Kidney (tissue), 22 donors: ENCODE measurements at regions of chr4 and their contacts with region 1.

Region 1: DNA sequence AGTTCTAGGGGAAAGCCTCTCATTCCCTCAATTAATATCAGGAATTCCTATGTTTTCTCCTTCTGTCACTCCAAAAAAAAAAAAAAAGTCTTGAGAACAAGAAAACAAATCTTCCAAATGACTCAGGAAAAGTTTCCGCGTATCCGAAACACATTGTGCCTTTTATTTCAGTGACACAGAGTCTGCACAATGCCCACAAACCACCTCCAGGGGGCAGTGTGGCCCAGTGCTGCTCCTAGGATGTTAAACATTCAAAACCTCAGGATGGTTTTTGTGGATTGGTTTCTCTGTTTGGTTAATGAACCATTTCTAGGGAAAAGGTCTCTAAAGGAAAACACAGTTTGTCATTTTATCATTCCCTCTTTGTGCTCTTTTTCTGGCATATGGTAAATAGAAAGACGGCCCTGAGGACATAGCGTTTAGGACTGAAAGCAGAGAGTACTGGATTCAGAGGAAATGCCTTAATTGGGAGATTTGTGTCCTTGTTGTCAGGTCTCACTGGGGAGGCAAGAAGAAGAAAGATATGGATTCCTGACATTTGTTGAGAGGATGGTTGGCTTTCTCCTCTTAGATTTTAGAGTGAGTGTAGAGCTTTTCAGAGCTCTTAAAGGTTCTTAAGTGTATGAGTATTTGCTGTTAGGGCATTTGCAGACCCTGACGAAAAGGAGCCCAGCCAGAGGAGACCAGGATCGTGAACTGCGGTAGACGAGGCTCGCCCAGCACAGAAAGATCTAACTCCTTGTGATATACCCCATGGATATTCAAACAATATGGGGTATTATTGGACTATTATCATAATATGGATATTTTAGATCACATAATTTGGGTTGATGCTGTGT is 65.7 kb upstream of the MAP9 start:
- DNase-seq: peak; percentile 82 to 95 (median 88)
- H3K4me3 ChIP-seq: peak overlapping the region in 2 of 3 donors; percentile 37 to 38
- H3K27ac ChIP-seq: no peak overlapping the region
- H3K4me1 ChIP-seq: peaks cover 0 to 5% (median 0%) of the 10 kb centered on the region in 3 donors
- H3K27me3 ChIP-seq: no peaks in the 10 kb centered on the region
- CTCF ChIP-seq: peak; percentile 97

Region 2: GRCh38 chr4:155787113-155787710 is 344.7 kb after region 1 on chr4:
- intact Hi-C with region 1: loop called (anchors 5 kb)
- DNase-seq: peak in 3 of 5 donors; percentile 17 to 81 (median 80)
- H3K4me3 ChIP-seq: peak overlapping the region in 2 of 3 donors; percentile 18 to 35
- H3K27ac ChIP-seq: no peak overlapping the region
- H3K4me1 ChIP-seq: peaks cover 0 to 2% (median 0%) of the 10 kb centered on the region in 3 donors
- H3K27me3 ChIP-seq: no peaks in the 10 kb centered on the region
- CTCF ChIP-seq: peak; percentile 91

Region 3: GRCh38 chr4:155908187-155909139 is 466.0 kb after region 1 on chr4:
- intact Hi-C with region 1: no loop called
- DNase-seq: no peak
- H3K4me3 ChIP-seq: no peak overlapping the region
- H3K27ac ChIP-seq: no peak overlapping the region
- H3K4me1 ChIP-seq: no peaks in the 10 kb centered on the region
- H3K27me3 ChIP-seq: no peaks in the 10 kb centered on the region
- CTCF ChIP-seq: no peak